GM12878 (cell line): ENCODE measurements at regions of chr2 and their contacts with region 1.

Region 1: DNA sequence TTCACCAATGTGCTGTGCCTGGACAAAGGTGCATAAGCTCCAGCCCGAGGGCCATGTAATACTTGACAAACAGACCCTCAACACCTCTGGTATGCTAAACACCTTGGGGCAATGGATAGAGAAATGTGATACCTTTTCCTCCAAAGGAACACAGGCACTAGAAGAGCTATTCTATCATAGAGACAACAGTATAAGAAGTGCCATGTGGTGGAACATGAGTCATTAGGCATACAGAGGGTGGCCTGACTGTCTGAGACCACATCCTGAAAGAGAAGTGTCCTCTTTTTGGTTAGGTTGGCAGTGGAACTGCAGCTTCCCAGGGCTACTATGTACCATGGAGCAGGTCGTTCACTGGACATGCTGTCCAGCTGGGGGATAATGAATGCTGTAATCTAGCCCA is 153.9 kb downstream of the INSIG2 start:
- DNase-seq: no peak
- ATAC-seq: no peak
- H3K4me3 ChIP-seq: no peak overlapping the region
- H3K27ac ChIP-seq: no peak overlapping the region
- H3K4me1 ChIP-seq: no peaks in the 10 kb centered on the region
- H3K27me3 ChIP-seq: no peaks in the 10 kb centered on the region
- CTCF ChIP-seq: no peak
- EP300 ChIP-seq: no peak
- POLR2A ChIP-seq: no peak
- RAD21 ChIP-seq: no peak

Region 2: DNA sequence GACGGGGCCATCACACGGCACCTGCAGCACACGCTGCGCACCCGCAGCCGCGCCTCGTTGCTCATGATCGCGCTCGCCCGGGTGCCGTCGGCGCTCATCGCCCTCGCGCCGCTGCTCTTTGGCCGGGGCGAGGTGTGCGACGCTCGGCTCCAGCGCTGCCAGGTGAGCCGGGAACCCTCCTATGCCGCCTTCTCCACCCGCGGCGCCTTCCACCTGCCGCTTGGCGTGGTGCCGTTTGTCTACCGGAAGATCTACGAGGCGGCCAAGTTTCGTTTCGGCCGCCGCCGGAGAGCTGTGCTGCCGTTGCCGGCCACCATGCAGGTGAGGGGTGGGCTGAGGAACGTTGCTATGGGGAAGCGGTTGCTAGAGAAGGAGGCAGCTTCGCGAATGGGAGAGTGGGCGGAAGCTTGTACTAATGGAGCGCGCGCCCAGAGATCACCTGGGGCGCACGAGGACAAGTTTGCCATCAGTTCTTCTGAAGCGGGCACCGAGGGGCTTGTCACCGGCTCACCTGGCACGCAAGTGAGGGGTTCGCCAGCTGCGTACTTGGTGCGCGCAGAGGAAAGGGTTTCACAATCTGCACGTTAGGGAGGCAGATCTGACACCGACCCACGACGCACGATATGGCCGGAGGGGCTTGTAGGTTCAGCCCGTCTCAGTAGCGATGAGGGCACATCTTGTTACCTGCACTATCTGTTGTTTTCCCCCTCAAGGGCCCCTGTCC is 382.1 kb before region 1 on chr2:
- CTCF ChIA-PET with region 1: no interaction called
- POLR2A ChIA-PET with region 1: no interaction called
- RAD21 ChIA-PET with region 1: no interaction called
- SMC1A ChIA-PET with region 1: no interaction called
- in situ Hi-C with region 1: no loop called
- intact Hi-C with region 1: loop called (anchors 5 kb)
- DNase-seq: no peak
- ATAC-seq: no peak
- H3K4me3 ChIP-seq: no peak overlapping the region
- H3K27ac ChIP-seq: no peak overlapping the region
- H3K4me1 ChIP-seq: no peaks in the 10 kb centered on the region
- H3K27me3 ChIP-seq: no peaks in the 10 kb centered on the region
- CTCF ChIP-seq: no peak
- EP300 ChIP-seq: no peak
- POLR2A ChIP-seq: no peak
- RAD21 ChIP-seq: no peak

Region 3: GRCh38 chr2:118202707-118203303 is 39.4 kb before region 1 on chr2:
- CTCF ChIA-PET with region 1: no interaction called
- POLR2A ChIA-PET with region 1: no interaction called
- RAD21 ChIA-PET with region 1: no interaction called
- SMC1A ChIA-PET with region 1: no interaction called
- in situ Hi-C with region 1: no loop called
- intact Hi-C with region 1: no loop called
- DNase-seq: no peak
- ATAC-seq: peak; percentile 98
- H3K4me3 ChIP-seq: no peak overlapping the region
- H3K27ac ChIP-seq: no peak overlapping the region
- H3K4me1 ChIP-seq: no peaks in the 10 kb centered on the region
- H3K27me3 ChIP-seq: no peaks in the 10 kb centered on the region; a peak in 1 of 4 replicates
- CTCF ChIP-seq: peak; percentile 84 to 91 (median 90)
- EP300 ChIP-seq: no peak
- POLR2A ChIP-seq: no peak
- RAD21 ChIP-seq: peak; percentile 62

Region 4: DNA sequence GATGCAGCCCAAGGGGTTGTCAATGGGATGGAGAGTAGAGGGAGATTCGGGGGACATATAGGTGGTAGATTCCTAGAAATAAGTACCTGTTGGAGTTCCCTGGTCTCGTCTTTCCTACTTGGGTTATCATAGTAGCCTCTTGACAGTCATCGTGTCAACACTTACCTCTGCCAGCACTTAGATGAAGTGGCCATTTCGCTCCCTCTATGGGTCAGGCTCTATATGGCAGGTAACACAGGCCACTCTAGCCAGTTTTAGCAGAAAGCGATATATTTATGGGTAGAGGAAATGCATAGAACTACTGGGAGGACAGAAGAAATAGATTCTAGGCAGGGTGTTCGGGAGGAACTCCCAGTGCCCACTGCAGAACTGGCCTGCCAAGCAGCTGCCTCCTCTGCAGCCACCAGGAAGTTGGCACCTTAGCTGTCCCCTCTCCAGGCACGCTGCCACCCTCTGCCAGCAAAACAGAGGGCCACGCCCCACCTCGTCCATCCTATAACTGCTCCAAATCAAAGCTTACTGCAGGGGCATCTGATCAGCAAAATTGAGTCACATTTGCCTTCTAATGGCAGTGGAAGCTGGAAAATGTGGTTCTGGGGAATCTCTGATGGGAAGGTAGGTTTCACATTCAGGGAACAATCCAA is 27.3 kb after region 1 on chr2:
- CTCF ChIA-PET with region 1: no interaction called
- POLR2A ChIA-PET with region 1: no interaction called
- RAD21 ChIA-PET with region 1: no interaction called
- SMC1A ChIA-PET with region 1: no interaction called
- in situ Hi-C with region 1: no loop called
- intact Hi-C with region 1: no loop called
- DNase-seq: no peak
- ATAC-seq: peak; percentile 77
- H3K4me3 ChIP-seq: no peak overlapping the region
- H3K27ac ChIP-seq: no peak overlapping the region
- H3K4me1 ChIP-seq: no peaks in the 10 kb centered on the region
- H3K27me3 ChIP-seq: no peaks in the 10 kb centered on the region
- CTCF ChIP-seq: peak; percentile 41 to 50 (median 45); a peak in 4 of 6 replicates
- EP300 ChIP-seq: no peak
- POLR2A ChIP-seq: no peak
- RAD21 ChIP-seq: peak; percentile 55

Region 5: GRCh38 chr2:118371515-118371914 is 129.3 kb after region 1 on chr2:
- CTCF ChIA-PET with region 1: no interaction called
- POLR2A ChIA-PET with region 1: no interaction called
- RAD21 ChIA-PET with region 1: no interaction called
- SMC1A ChIA-PET with region 1: no interaction called
- in situ Hi-C with region 1: no loop called
- intact Hi-C with region 1: no loop called
- DNase-seq: no peak
- ATAC-seq: peak; percentile 76
- H3K4me3 ChIP-seq: no peak overlapping the region
- H3K27ac ChIP-seq: no peak overlapping the region
- H3K4me1 ChIP-seq: no peaks in the 10 kb centered on the region
- H3K27me3 ChIP-seq: no peaks in the 10 kb centered on the region
- CTCF ChIP-seq: peak; percentile 48 to 60 (median 60); a peak in 5 of 6 replicates
- EP300 ChIP-seq: no peak
- POLR2A ChIP-seq: no peak
- RAD21 ChIP-seq: peak; percentile 63

Region 6: DNA sequence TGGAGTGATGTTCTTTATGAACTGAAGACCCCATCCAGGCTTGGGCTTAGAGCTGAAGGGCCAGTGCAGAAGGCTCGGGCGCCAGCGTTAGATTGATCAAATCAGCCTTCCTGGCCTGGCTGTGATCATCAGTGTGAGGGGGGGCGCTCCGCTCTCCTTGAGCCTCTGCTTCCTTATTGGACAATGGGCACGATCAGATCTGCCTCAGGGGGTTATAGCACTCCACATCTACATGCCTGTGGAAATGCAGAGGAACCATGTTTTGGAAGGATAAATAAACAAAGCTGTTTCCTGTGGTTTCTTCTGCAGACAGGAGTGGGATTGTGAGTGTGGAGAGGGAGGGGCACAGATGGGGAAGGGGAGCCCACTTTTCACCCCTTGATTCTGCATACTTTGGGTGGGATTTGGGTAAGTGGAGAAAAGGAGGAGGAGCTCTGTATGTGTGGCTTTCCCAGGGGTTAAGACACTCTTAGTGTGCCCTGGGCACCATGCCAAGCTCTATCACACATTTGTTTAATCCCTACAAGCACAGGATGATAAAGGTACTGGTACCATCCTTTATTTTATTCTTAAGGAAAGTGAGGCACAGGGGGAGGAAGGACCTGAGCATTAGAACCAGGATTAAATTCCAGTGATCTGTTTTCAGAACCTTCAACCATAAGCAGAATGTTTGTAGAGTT is 454.7 kb after region 1 on chr2:
- CTCF ChIA-PET with region 1: no interaction called
- POLR2A ChIA-PET with region 1: no interaction called
- RAD21 ChIA-PET with region 1: no interaction called
- SMC1A ChIA-PET with region 1: no interaction called
- in situ Hi-C with region 1: no loop called
- intact Hi-C with region 1: no loop called
- DNase-seq: no peak
- ATAC-seq: no peak
- H3K4me3 ChIP-seq: no peak overlapping the region
- H3K27ac ChIP-seq: no peak overlapping the region
- H3K4me1 ChIP-seq: no peaks in the 10 kb centered on the region
- H3K27me3 ChIP-seq: no peaks in the 10 kb centered on the region
- CTCF ChIP-seq: no peak
- EP300 ChIP-seq: no peak
- POLR2A ChIP-seq: no peak
- RAD21 ChIP-seq: no peak